IMR-90 (cell line): ENCODE measurements at regions of chr18 and their contacts with region 1.

Region 1: GRCh38 chr18:54127759-54128378 is 96.6 kb downstream of the MBD2 start:
- DNase-seq: peak; percentile 54
- ATAC-seq: peak; percentile 98
- H3K4me3 ChIP-seq: no peak overlapping the region
- H3K27ac ChIP-seq: no peak overlapping the region
- H3K4me1 ChIP-seq: no peaks in the 10 kb centered on the region
- H3K27me3 ChIP-seq: no peaks in the 10 kb centered on the region
- CTCF ChIP-seq: peak; percentile 69
- POLR2A ChIP-seq: no peak
- RAD21 ChIP-seq: peak; percentile 70

Region 2: DNA sequence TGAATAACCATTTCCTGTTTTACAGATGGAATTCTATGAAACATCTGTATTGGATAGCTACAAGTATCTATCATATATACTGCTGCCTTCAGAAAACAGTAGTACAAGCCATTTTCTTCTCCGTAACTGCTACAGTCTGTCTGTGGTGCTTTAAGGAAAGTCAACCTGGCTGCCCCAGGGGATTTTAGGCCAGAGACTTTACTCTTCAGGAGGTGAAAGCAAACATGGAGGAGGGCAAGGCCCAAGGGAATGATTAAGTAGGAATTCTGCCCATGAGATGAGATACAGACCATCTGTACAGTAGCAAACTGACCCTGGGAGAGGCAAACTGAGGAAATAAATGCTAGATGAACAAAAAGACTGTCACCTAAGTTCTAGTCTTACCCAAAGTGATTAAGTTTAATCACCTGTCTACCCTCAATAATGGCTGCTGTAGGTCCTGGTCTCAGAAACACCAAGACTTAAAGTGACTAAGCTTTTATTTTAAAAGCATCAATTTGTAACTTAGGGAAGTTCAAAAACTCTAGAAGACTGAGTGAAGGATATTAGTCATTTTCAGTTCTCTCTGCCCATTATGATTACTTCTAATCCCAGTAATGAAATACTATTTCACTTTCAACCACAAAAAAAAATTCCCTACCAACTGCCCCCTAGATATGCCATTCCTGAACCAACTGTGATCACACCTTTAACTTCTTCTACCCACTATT is 81.8 kb after region 1 on chr18:
- CTCF ChIA-PET with region 1: interaction called, 13 read pairs
- POLR2A ChIA-PET with region 1: no interaction called
- dilution Hi-C with region 1: no loop called
- in situ Hi-C with region 1: no loop called
- intact Hi-C with region 1: no loop called
- DNase-seq: peak; percentile 15
- ATAC-seq: peak; percentile 62
- H3K4me3 ChIP-seq: no peak overlapping the region
- H3K27ac ChIP-seq: no peak overlapping the region
- H3K4me1 ChIP-seq: peaks cover 6% of the 10 kb centered on the region
- H3K27me3 ChIP-seq: no peaks in the 10 kb centered on the region
- CTCF ChIP-seq: no peak
- POLR2A ChIP-seq: no peak
- RAD21 ChIP-seq: no peak

Region 3: DNA sequence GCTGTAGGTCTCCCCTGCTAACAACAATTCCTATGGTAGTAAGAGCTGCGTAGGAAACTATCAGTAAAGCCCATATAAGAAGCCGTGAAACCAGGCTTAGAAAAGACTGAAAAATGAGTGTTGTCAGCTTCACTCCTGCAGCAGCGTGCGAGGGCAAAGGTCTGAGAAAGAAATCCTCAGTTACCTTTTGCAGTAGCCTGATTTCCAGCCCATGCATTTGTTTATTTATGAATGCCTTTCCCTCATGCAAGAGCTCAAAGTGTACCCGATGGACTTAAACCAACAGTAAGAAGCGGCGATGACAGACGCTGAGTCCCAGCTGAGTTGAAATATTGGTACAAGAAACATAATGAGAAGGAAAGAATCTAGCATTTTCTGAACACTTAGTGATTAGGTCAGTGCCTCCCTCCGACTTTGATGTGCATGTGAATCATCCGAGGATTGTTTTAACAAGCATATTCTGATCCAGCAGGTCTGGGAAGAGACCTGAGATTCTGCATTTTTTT is 126.4 kb after region 1 on chr18:
- CTCF ChIA-PET with region 1: no interaction called
- POLR2A ChIA-PET with region 1: no interaction called
- dilution Hi-C with region 1: no loop called
- in situ Hi-C with region 1: no loop called
- intact Hi-C with region 1: no loop called
- DNase-seq: peak; percentile 20
- ATAC-seq: peak; percentile 60
- H3K4me3 ChIP-seq: no peak overlapping the region
- H3K27ac ChIP-seq: no peak overlapping the region
- H3K4me1 ChIP-seq: no peaks in the 10 kb centered on the region
- H3K27me3 ChIP-seq: peaks cover 1% of the 10 kb centered on the region; the same call in 1 of the 2 replicates
- CTCF ChIP-seq: no peak
- POLR2A ChIP-seq: no peak
- RAD21 ChIP-seq: no peak